Activated naive CD4-positive, alpha-beta T cell treated with anti-CD3 and anti-CD28 coated beads for 36 hours (primary cell): ENCODE measurements at regions of chr12 and their contacts with region 1.

Region 1: DNA sequence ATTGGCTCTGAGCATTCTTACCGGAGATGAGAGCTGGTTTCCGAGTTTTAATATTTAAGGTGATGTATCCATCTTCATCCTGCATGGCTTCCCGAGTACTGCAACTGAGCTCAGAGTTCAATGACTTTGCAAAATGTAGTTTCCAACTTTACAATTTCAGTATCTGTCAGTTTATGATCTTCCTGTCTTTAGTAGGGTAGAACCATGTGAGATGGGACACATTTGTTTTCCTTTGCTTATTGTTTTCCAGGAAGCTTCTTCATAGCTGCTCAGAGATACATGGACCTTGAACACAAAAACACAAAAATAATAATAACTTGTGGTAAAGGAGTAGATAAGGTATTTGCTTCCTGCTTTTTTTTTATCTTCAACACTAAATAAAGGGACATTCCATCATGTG is at the start of gene CLEC1B:
- DNase-seq: no peak
- H3K4me3 Mint-ChIP-seq: no peak within 1 kb of the TSS
- H3K27ac Mint-ChIP-seq: no peak within 1 kb of the TSS
- H3K4me1 Mint-ChIP-seq: no peaks in the 10 kb centered on the region
- H3K27me3 Mint-ChIP-seq: no peaks in the 10 kb centered on the region
- total RNA-seq, gene CLEC1B: not detected

Region 2: GRCh38 chr12:10033783-10034545 is 34.9 kb after region 1 on chr12:
- CTCF ChIA-PET with region 1: no interaction called
- intact Hi-C with region 1: loop called (anchors 2 kb)
- DNase-seq: no peak
- H3K4me3 Mint-ChIP-seq: no peak overlapping the region
- H3K27ac Mint-ChIP-seq: no peak overlapping the region
- H3K4me1 Mint-ChIP-seq: no peaks in the 10 kb centered on the region
- H3K27me3 Mint-ChIP-seq: no peaks in the 10 kb centered on the region